Activated B cell treated with CpG ODN at 0.5 μM for 24 hours (primary cell): ENCODE measurements at regions of chr3 and their contacts with region 1.

Region 1: DNA sequence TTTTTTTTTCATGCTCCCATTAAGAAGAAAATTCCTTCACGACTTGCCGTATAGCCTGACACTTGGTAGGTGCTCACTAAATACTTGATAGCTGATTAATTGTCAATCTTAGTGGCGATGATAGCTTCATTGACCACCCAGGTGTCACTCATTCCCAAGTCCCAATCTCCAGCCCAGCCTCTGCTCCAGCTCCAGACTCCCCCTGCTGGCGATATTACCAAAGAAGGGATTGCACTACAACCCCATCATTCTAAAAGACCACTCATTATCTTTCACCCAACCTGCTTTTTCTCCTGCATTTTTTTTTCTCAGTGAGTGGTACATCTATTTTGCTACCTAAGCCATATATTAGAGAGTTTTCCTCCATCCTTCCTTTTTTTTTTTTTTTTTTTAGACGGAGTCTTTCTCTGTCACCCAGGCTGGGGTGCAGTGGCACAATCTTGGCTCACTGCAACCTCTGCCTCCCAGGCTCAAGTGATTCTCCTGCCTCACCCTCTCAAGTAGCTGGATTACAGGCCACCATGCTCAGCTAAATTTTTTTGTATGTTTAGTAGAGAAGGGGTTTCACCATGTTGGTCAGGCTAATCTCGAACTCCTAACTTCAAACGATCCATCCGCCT is 19.5 kb upstream of the COMMD2 start:
- DNase-seq: no peak
- ATAC-seq: peak; percentile 54
- H3K4me3 Mint-ChIP-seq: no peak overlapping the region
- H3K27ac Mint-ChIP-seq: no peak overlapping the region
- H3K4me1 Mint-ChIP-seq: no peaks in the 10 kb centered on the region
- H3K27me3 Mint-ChIP-seq: peaks cover 7% of the 10 kb centered on the region
- CTCF ChIP-seq: peak; percentile 37

Region 2: GRCh38 chr3:149512209-149512782 is 259.5 kb before region 1 on chr3:
- CTCF ChIA-PET with region 1: no interaction called
- POLR2A ChIA-PET with region 1: no interaction called
- intact Hi-C with region 1: loop called (anchors 1 kb)
- DNase-seq: no peak
- ATAC-seq: peak; percentile 56
- H3K4me3 Mint-ChIP-seq: no peak overlapping the region
- H3K27ac Mint-ChIP-seq: no peak overlapping the region
- H3K4me1 Mint-ChIP-seq: peaks cover 10% of the 10 kb centered on the region
- H3K27me3 Mint-ChIP-seq: peaks cover 13% of the 10 kb centered on the region
- CTCF ChIP-seq: peak; percentile 30

Region 3: GRCh38 chr3:149559525-149559924 is 212.2 kb before region 1 on chr3:
- CTCF ChIA-PET with region 1: no interaction called
- POLR2A ChIA-PET with region 1: no interaction called
- intact Hi-C with region 1: no loop called
- DNase-seq: no peak
- ATAC-seq: no peak
- H3K4me3 Mint-ChIP-seq: no peak overlapping the region
- H3K27ac Mint-ChIP-seq: no peak overlapping the region
- H3K4me1 Mint-ChIP-seq: no peaks in the 10 kb centered on the region
- H3K27me3 Mint-ChIP-seq: no peaks in the 10 kb centered on the region
- CTCF ChIP-seq: no peak

Region 4: DNA sequence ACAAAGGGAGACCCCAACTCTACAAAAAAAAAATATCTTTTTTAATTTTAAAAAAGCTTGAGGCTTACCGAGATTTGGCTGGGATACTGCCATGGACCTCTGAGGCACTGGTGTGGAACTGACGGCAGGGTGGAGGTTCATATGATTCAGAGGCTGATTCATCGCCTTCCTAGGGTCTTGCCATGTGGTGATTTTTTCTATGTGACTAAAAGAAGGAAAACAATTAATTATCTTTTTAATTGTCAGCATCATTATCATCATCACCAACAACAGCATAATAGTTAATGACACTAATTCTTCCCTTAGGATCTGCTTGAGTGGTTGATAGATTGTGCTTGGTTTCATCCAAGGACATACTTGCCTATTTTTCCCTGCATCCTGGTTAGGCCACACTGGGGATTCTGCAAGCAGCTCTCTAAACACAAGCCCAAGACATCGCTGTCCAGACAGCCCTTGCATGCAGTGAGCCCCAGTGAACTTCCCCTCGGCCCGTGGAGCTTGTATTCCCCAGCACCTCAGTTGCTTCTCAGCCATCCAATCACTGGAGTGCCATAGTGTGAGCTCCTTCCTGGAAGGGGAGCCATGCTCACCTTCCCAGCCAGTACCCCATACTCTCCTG is 198.9 kb before region 1 on chr3:
- CTCF ChIA-PET with region 1: interaction called, 14 read pairs
- POLR2A ChIA-PET with region 1: no interaction called
- intact Hi-C with region 1: loop called (anchors 1 kb)
- DNase-seq: no peak
- ATAC-seq: no peak
- H3K4me3 Mint-ChIP-seq: no peak overlapping the region
- H3K27ac Mint-ChIP-seq: no peak overlapping the region
- H3K4me1 Mint-ChIP-seq: peaks cover 4% of the 10 kb centered on the region
- H3K27me3 Mint-ChIP-seq: no peaks in the 10 kb centered on the region
- CTCF ChIP-seq: no peak

Region 5: GRCh38 chr3:149752051-149752787 is 19.5 kb before region 1 on chr3 and contains the start of gene COMMD2:
- CTCF ChIA-PET with region 1: interaction called, 14 read pairs
- POLR2A ChIA-PET with region 1: interaction called, 8 read pairs
- intact Hi-C with region 1: no loop called
- DNase-seq: peak; percentile 68
- ATAC-seq: peak; percentile 99
- H3K4me3 Mint-ChIP-seq: peak within 1 kb of the TSS; percentile 98
- H3K27ac Mint-ChIP-seq: peak within 1 kb of the TSS; percentile 92
- H3K4me1 Mint-ChIP-seq: peaks cover 30% of the 10 kb centered on the region
- H3K27me3 Mint-ChIP-seq: peaks cover 7% of the 10 kb centered on the region
- CTCF ChIP-seq: no peak
- total RNA-seq, gene COMMD2: 41.5 and 45.6 TPM in 2 replicates

Region 6: DNA sequence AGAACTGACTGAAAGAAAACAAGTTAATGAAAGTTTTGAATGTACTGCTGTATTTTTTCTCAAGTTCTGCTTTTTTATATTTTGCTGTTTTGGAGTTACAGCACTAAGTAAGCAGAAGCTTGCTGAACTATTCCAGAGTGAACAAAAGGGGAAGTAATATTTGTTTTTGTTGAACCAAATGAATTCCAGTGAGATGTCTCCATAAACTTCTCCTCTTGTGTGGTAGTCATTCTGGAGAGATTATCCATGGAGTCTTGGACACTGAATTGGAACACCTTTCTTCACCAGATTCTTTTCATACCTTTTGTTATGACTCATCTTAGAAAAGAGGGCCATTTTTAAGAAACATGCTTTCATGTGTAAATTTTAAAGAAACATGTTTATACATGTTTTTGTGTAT is 11.8 kb after region 1 on chr3:
- CTCF ChIA-PET with region 1: interaction called, 14 read pairs
- POLR2A ChIA-PET with region 1: no interaction called
- intact Hi-C with region 1: no loop called
- DNase-seq: no peak
- ATAC-seq: peak; percentile 26
- H3K4me3 Mint-ChIP-seq: no peak overlapping the region
- H3K27ac Mint-ChIP-seq: peak overlapping the region; percentile 84
- H3K4me1 Mint-ChIP-seq: peaks cover 46% of the 10 kb centered on the region
- H3K27me3 Mint-ChIP-seq: no peaks in the 10 kb centered on the region
- CTCF ChIP-seq: no peak

Region 7: GRCh38 chr3:150158943-150159625 is 387.3 kb after region 1 on chr3:
- CTCF ChIA-PET with region 1: no interaction called
- POLR2A ChIA-PET with region 1: no interaction called
- intact Hi-C with region 1: no loop called
- DNase-seq: no peak
- ATAC-seq: no peak
- H3K4me3 Mint-ChIP-seq: no peak overlapping the region
- H3K27ac Mint-ChIP-seq: no peak overlapping the region
- H3K4me1 Mint-ChIP-seq: no peaks in the 10 kb centered on the region
- H3K27me3 Mint-ChIP-seq: peaks cover 7% of the 10 kb centered on the region
- CTCF ChIP-seq: no peak